BJ (cell line): ENCODE measurements at regions of chr15 and their contacts with region 1.

Region 1: DNA sequence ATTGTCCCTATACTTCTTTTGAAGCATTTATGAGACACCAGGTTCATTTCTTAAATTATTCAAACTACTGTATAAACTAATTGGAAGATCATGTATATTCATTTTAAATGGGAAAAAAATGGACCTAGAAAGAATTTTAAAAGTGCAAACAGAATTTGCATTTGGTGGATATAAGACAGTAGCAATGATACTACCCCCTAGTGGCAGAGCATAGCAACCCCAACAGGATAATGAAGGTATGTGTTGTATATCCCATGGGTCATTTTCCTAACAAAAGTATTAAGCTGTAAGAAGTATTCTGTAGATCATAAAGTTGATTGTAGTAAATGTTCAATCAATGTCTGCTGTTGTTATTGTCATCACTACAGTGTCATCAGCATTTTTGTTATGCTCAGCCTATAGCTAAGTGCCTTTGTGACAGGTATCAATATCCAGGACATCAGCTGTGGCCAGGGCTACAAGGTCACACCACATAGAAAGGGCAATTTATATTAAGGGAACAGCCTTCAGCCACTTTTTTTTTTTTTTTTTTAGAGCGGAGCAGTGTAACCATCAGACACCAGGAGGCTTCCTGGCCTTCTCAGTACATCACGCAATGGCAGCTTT is 175.8 kb downstream of the FOXB1 start:
- DNase-seq: no peak
- H3K4me3 ChIP-seq: no peak overlapping the region
- H3K27me3 ChIP-seq: peaks cover 3% of the 10 kb centered on the region; the same call in 1 of the 2 replicates
- CTCF ChIP-seq: peak; percentile 87

Region 2: DNA sequence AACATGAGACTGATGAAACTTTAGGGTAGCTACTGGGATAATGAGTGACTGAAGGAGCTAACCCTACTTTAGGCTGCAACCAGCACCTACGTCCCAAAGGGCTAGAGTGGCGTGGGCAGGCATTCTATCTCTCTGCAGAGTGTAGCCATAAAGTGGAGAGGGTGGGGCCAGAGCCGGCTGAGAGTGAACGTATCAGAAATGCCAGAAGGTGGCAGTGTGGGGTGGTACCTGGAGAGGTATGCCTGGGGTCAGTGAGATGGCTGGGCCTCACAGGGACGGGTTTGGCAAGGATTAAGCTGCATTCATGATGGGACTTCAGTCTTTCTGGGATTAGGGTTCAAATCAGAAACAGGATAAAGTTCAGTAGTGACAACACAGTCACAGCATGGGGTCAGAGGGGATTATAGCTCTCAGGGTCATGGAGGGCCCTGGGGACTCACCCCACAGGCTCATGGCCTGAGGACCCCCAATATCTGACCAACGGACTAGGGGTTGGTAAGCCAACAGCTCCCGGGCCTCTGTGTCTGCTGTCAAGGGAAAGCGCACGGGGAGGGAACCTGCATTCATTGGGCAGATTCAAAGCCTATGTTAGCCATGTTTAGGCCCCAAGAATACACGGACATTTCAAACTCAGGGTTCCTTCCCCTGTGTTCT is 262.3 kb before region 1 on chr15:
- CTCF ChIA-PET with region 1: interaction called, 18 read pairs
- POLR2A ChIA-PET with region 1: no interaction called
- DNase-seq: no peak
- H3K4me3 ChIP-seq: no peak overlapping the region
- H3K27me3 ChIP-seq: no peaks in the 10 kb centered on the region
- CTCF ChIP-seq: peak; percentile 45